HCT116 (cell line): ENCODE measurements at regions of chr4 and their contacts with region 1.

Region 1: GRCh38 chr4:175536852-175537453 is 275.1 kb downstream of the GPM6A start:
- DNase-seq: peak; percentile 72
- ATAC-seq: peak; percentile 68
- H3K4me3 ChIP-seq: no peak overlapping the region
- H3K27ac ChIP-seq: no peak overlapping the region
- H3K4me1 ChIP-seq: peaks cover 13 to 15% of the 10 kb centered on the region in 2 experiments; a peak in 3 of 4 replicates
- H3K27me3 ChIP-seq: no peaks in the 10 kb centered on the region
- CTCF ChIP-seq: peak; percentile 38 to 55 (median 50); a peak in 4 of 6 replicates
- POLR2A ChIP-seq: no peak
- RAD21 ChIP-seq: peak; percentile 78

Region 2: GRCh38 chr4:174764105-174764729 is 772.7 kb before region 1 on chr4:
- CTCF ChIA-PET with region 1: interaction called, 11 read pairs
- POLR2A ChIA-PET with region 1: no interaction called
- RAD21 ChIA-PET with region 1: no interaction called
- intact Hi-C with region 1: loop called (anchors 1 kb)
- DNase-seq: peak; percentile 40
- ATAC-seq: peak; percentile 85
- H3K4me3 ChIP-seq: no peak overlapping the region
- H3K27ac ChIP-seq: no peak overlapping the region
- H3K4me1 ChIP-seq: no peaks in the 10 kb centered on the region
- H3K27me3 ChIP-seq: no peaks in the 10 kb centered on the region
- CTCF ChIP-seq: peak; percentile 55 to 77 (median 55)
- POLR2A ChIP-seq: no peak
- RAD21 ChIP-seq: peak; percentile 61

Region 3: DNA sequence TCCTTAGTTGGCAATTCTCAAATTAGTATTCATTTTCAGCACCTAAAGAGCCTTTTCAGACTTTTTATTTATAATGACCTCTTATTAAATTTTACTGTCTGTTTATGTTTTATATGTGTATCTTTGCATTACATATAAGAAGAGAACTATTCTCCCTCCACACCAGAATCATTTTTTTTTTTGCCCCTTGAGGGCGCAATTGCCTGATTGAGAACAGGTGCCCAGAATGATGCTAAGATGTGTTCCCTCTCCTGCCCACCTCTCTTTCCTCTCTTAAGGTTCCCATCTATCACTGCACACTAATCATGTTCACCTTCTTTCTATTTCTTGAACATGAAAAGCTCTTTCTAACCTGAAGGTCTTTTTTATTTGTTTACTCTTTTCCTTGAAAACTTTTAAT is 663.0 kb before region 1 on chr4:
- CTCF ChIA-PET with region 1: no interaction called
- POLR2A ChIA-PET with region 1: no interaction called
- RAD21 ChIA-PET with region 1: no interaction called
- intact Hi-C with region 1: loop called (anchors 1 kb)
- DNase-seq: peak; percentile 4
- ATAC-seq: peak; percentile 64
- H3K4me3 ChIP-seq: no peak overlapping the region
- H3K27ac ChIP-seq: no peak overlapping the region
- H3K4me1 ChIP-seq: no peaks in the 10 kb centered on the region
- H3K27me3 ChIP-seq: no peaks in the 10 kb centered on the region
- CTCF ChIP-seq: peak; percentile 43 to 61 (median 46); a peak in 5 of 6 replicates
- POLR2A ChIP-seq: no peak
- RAD21 ChIP-seq: peak; percentile 60

Region 4: GRCh38 chr4:175271010-175271630 is 265.8 kb before region 1 on chr4:
- CTCF ChIA-PET with region 1: no interaction called
- POLR2A ChIA-PET with region 1: no interaction called
- RAD21 ChIA-PET with region 1: no interaction called
- intact Hi-C with region 1: loop called (anchors 10 kb)
- DNase-seq: no peak
- ATAC-seq: no peak
- H3K4me3 ChIP-seq: no peak overlapping the region
- H3K27ac ChIP-seq: no peak overlapping the region
- H3K4me1 ChIP-seq: peaks cover 0 to 11% of the 10 kb centered on the region in 2 experiments; a peak in 2 of 4 replicates
- H3K27me3 ChIP-seq: no peaks in the 10 kb centered on the region
- CTCF ChIP-seq: no peak
- POLR2A ChIP-seq: no peak
- RAD21 ChIP-seq: no peak